MCF 10A (cell line): ENCODE measurements at regions of chr20 and their contacts with region 1.

Region 1: DNA sequence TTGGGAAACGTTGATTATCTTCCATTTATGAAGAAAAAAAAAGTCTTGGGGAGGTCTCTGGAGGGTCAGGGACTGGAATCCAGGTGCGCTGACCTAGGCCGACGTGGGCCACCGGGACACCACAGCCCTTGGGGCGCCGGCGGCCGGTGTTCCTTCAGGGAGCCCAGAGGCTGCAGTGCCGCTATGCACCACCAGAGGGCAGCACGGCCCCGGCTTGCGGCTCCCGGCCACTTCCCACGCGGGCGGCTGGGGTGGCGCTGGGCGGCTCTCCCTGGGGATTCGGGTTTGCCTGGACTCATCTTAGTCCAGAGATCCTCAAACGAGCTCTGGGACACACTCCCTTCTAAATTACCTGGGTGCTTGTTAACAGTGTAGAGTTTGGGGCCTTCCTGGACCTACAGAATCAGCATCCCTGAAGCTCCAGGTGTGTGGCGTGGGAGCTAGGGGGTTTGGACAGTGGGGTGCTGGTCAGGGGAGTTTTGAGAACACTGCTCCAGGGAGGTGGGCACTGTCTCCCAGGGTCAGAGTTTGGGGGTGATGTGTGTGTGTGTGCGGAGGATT is 23.0 kb upstream of the GTSF1L start:
- DNase-seq: peak; percentile 75
- H3K4me3 Mint-ChIP-seq: no peak overlapping the region
- H3K27ac Mint-ChIP-seq: peak overlapping the region; percentile 94
- H3K4me1 Mint-ChIP-seq: peaks cover 19% of the 10 kb centered on the region
- H3K27me3 Mint-ChIP-seq: no peaks in the 10 kb centered on the region
- CTCF ChIP-seq: peak; percentile 100

Region 2: DNA sequence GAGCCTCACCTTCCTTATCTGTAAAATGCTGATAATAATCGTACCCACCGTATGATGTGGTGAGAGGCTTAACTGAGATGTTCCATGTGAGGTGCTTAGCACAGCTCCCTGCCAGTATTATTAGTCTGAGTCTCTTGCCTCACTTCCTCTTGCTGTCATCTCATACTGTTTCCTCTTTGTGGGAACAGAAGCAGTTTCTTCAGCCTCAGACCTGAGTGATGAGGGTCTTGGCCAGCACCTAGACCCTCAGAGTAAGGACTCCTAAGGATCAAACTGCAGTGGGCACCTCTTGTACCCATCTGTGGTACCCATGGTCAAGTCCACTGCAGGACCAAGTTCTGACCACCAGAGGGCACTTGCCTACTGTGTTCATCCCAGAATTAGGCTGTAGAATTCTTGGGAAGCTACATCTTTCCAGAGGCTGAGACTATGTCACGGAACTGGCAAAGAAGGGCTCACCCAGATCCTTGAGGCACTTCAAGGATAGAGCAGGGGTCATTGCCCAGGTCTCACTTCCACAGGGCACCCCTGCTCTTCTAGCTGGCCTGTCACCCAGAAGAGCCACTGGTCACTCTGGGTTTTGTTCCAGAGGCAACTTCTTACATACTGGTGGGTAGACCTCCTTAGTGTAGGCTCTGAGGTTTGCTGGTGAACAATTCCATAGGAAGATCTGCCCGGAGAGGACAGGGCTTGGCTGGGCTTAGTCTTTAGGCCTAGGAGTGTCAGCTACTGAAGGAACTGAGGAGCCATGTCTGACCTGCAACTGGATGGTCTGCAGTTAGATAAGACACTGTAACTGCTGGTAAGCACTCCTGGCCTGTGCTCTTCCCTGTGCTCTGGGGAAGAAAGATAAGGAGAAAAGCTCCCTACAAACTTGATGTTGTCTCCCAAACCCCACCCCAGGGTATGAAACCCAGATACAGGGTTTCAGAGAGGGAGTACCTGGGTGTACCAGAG is 211.6 kb before region 1 on chr20:
- CTCF ChIA-PET with region 1: interaction called, 60 read pairs
- POLR2A ChIA-PET with region 1: interaction called, 3 read pairs
- intact Hi-C with region 1: no loop called
- DNase-seq: peak; percentile 68
- H3K4me3 Mint-ChIP-seq: no peak overlapping the region
- H3K27ac Mint-ChIP-seq: no peak overlapping the region
- H3K4me1 Mint-ChIP-seq: peaks cover 5% of the 10 kb centered on the region
- H3K27me3 Mint-ChIP-seq: no peaks in the 10 kb centered on the region
- CTCF ChIP-seq: peak; percentile 95

Region 3: GRCh38 chr20:43736588-43737158 is 13.1 kb before region 1 on chr20:
- CTCF ChIA-PET with region 1: interaction called, 32 read pairs
- POLR2A ChIA-PET with region 1: interaction called, 3 read pairs
- intact Hi-C with region 1: no loop called
- DNase-seq: no peak
- H3K4me3 Mint-ChIP-seq: no peak overlapping the region
- H3K27ac Mint-ChIP-seq: no peak overlapping the region
- H3K4me1 Mint-ChIP-seq: no peaks in the 10 kb centered on the region
- H3K27me3 Mint-ChIP-seq: peaks cover 14% of the 10 kb centered on the region
- CTCF ChIP-seq: no peak

Region 4: DNA sequence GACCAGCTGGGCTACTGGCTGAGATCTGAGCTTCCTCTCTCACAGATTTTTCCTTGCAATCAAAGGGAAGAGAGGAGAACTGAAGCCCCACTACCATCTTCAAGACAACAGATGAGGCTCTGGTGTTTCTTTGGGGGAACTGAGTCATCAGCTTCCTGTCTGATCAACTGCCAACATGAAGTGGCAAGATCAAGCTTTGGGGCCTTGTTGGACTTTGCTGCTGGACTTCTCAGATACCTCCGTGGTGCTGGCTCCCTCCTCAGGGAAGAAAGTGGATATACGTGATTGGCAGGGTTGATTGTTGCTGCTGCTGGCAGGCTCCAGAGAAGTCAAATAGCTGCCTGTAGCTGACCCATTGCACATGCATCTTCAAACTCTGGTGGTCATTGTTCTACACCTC is 161.3 kb after region 1 on chr20:
- CTCF ChIA-PET with region 1: interaction called, 6 read pairs
- POLR2A ChIA-PET with region 1: no interaction called
- intact Hi-C with region 1: loop called (anchors 1 kb)
- DNase-seq: peak; percentile 75
- H3K4me3 Mint-ChIP-seq: no peak overlapping the region
- H3K27ac Mint-ChIP-seq: no peak overlapping the region
- H3K4me1 Mint-ChIP-seq: peaks cover 5% of the 10 kb centered on the region
- H3K27me3 Mint-ChIP-seq: no peaks in the 10 kb centered on the region
- CTCF ChIP-seq: peak; percentile 8

Region 5: DNA sequence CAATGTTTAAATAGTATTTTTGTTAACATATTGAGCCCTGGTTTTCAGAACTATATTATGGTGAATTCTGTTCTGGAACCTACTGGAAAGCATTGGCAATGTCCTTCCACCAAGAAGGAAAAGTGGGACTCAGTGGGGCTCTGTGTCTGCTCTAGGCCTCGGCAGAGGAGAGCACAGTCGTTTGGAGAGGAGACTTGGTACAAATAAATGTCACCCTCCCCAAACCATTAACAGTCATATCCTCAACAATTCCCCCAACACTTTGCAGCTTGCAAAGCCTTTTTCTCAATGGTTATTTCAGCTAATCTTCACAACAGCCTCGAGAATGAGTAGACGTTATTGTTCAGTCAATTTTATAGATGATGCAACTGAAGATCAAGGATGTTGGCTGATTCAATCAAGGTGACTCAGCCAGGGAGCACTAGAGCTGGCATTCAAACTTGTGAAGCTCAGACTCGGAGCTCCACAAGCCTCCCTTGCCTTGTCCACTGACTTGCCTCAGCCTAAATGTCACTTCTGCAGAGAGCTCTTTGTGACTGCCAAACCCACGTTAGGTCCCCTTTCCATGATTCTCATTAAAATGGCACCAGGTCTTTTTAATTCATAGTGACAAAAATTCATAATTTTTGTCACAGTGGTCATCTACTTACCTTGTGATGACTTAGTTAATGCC is 225.4 kb after region 1 on chr20:
- CTCF ChIA-PET with region 1: interaction called, 10 read pairs
- POLR2A ChIA-PET with region 1: no interaction called
- intact Hi-C with region 1: no loop called
- DNase-seq: peak; percentile 86
- H3K4me3 Mint-ChIP-seq: no peak overlapping the region
- H3K27ac Mint-ChIP-seq: peak overlapping the region; percentile 75
- H3K4me1 Mint-ChIP-seq: peaks cover 16% of the 10 kb centered on the region
- H3K27me3 Mint-ChIP-seq: no peaks in the 10 kb centered on the region
- CTCF ChIP-seq: no peak

Region 6: GRCh38 chr20:44074252-44075151 is 324.7 kb after region 1 on chr20:
- CTCF ChIA-PET with region 1: interaction called, 521 read pairs
- POLR2A ChIA-PET with region 1: interaction called, 11 read pairs
- intact Hi-C with region 1: no loop called
- DNase-seq: peak; percentile 23
- H3K4me3 Mint-ChIP-seq: no peak overlapping the region
- H3K27ac Mint-ChIP-seq: no peak overlapping the region
- H3K4me1 Mint-ChIP-seq: no peaks in the 10 kb centered on the region
- H3K27me3 Mint-ChIP-seq: no peaks in the 10 kb centered on the region
- CTCF ChIP-seq: no peak

Region 7: DNA sequence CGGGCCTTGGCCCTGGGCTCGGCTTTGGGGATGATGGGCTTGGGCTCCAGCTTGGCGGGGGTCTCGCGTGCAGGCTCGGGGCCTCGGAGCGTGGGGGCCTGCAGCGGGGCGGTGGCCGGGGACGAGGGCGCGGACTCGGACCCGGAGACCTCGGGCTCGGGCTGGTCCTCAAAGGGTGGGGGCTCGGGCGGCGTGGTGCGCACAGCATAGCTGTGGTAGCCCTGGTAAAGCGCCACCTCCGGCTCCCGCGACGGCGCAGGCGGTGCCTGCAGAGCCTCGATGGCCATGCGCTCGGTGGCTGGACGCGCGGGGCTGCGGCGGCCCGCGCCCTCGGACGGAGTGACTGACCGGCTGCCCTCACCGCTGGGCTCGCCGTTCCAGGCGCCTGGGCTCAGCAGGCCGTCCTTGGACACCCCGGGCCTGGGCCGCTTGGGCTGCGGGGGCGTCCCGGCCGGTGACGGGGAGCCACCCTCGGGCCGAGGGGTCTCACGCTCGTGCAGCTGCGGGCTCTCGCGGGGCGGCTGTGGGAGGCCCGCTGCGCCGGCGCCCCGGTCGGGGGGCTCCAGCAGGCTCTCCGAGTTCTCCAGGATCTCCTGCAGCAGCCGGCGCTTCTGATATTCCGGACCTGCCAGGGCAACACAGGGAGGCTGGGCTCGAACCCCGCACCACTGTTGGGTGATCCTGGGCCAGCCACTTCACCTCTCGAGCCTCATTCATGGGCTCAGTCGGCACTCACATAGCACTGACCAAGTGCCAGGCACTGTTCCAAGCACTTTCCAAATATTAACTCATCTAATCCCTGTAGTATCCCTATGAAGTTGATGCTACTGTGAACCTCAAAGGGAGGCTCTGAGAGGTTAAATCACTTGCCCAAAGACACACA is 366.2 kb after region 1 on chr20:
- CTCF ChIA-PET with region 1: interaction called, 11 read pairs
- POLR2A ChIA-PET with region 1: no interaction called
- intact Hi-C with region 1: no loop called
- DNase-seq: no peak
- H3K4me3 Mint-ChIP-seq: no peak overlapping the region
- H3K27ac Mint-ChIP-seq: no peak overlapping the region
- H3K4me1 Mint-ChIP-seq: peaks cover 6% of the 10 kb centered on the region
- H3K27me3 Mint-ChIP-seq: no peaks in the 10 kb centered on the region
- CTCF ChIP-seq: no peak